Sigmoid colon (tissue), 7 donors: ENCODE measurements at regions of chr20 and their contacts with region 1.

Region 1: GRCh38 chr20:63009045-63009961 is 2.5 kb upstream of the BHLHE23 start:
- DNase-seq: peak; percentile 76
- H3K4me3 ChIP-seq: peak overlapping the region in 1 of 4 donors; percentile 15
- H3K27ac ChIP-seq: no peak overlapping the region
- H3K4me1 ChIP-seq: peaks cover 0 to 41% (median 27%) of the 10 kb centered on the region in 4 donors
- H3K27me3 ChIP-seq: peaks cover 66 to 100% (median 75%) of the 10 kb centered on the region in 3 donors
- CTCF ChIP-seq: peak; percentile 75 to 96 (median 93)
- EP300 ChIP-seq: no peak
- POLR2A ChIP-seq: no peak

Region 2: DNA sequence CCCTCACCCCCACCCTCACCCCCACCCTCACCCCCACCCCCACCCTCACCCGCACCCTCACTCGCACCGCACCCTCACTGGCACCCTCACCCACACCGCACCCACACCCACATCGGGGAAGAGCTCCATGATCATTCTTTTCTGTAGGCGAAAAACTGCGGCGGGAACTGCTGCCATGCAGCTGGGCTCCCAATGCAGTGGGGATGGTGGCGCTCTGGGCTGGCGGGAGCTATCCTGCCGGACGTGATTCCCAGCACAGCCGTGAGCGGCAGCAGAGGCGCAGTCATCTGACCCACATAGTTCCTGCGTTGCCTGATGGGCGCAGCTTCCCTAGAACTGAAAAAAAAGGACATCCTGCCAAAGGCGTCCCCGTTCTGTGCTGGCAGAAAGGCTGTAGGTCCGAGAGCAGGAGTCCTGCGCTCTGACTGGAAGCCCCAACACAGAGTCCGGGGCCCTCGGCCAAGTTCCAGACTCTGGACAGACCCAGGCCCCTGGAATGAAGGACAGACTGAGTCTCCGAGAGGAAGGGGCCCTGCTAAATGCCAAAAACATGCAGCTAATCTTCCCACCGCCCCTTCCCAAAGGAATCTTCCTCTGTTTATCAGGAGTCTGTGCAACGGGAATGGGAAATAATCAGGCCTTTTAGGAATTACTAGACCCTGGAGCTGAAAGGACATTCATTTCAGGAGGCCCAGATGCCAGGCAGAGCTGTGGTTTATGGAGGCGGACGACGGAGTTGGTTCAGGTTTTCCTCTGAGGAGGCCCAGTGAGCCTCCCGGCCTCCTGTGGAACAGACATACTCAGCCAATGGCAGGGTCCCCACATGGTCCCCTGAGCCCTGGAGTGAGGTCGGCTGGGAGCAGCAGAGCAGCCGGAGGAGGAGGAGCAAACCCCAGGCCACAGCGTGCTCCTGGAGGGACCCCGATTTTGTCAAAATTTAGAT is 133.6 kb before region 1 on chr20:
- intact Hi-C with region 1: loop called (anchors 1 kb)
- DNase-seq: peak; percentile 95
- H3K4me3 ChIP-seq: peak overlapping the region in 2 of 4 donors; percentile 23 to 27
- H3K27ac ChIP-seq: peak overlapping the region; percentile 71 to 88 (median 82)
- H3K4me1 ChIP-seq: peaks cover 0 to 30% (median 28%) of the 10 kb centered on the region in 4 donors
- H3K27me3 ChIP-seq: no peaks in the 10 kb centered on the region
- CTCF ChIP-seq: peak; percentile 35 to 53 (median 42)
- EP300 ChIP-seq: peak in 1 of 4 donors; percentile 49
- POLR2A ChIP-seq: no peak

Region 3: GRCh38 chr20:62900052-62900691 is 109.1 kb before region 1 on chr20:
- intact Hi-C with region 1: loop called (anchors 2 kb)
- DNase-seq: peak; percentile 92
- H3K4me3 ChIP-seq: peak overlapping the region in 1 of 4 donors; percentile 2
- H3K27ac ChIP-seq: peak overlapping the region; percentile 3 to 68 (median 31)
- H3K4me1 ChIP-seq: peaks cover 0 to 39% (median 25%) of the 10 kb centered on the region in 4 donors
- H3K27me3 ChIP-seq: no peaks in the 10 kb centered on the region
- CTCF ChIP-seq: peak; percentile 89 to 93 (median 90)
- EP300 ChIP-seq: no peak
- POLR2A ChIP-seq: no peak

Region 4: GRCh38 chr20:62937366-62938104 is 71.8 kb before region 1 on chr20:
- intact Hi-C with region 1: no loop called
- DNase-seq: peak; percentile 98
- H3K4me3 ChIP-seq: peak overlapping the region; percentile 72 to 94 (median 80)
- H3K27ac ChIP-seq: peak overlapping the region; percentile 89 to 99 (median 94)
- H3K4me1 ChIP-seq: peaks cover 0 to 68% (median 57%) of the 10 kb centered on the region in 4 donors
- H3K27me3 ChIP-seq: no peaks in the 10 kb centered on the region
- CTCF ChIP-seq: no peak
- EP300 ChIP-seq: peak in 2 of 4 donors; percentile 21 to 81
- POLR2A ChIP-seq: peak; percentile 78 to 80

Region 5: DNA sequence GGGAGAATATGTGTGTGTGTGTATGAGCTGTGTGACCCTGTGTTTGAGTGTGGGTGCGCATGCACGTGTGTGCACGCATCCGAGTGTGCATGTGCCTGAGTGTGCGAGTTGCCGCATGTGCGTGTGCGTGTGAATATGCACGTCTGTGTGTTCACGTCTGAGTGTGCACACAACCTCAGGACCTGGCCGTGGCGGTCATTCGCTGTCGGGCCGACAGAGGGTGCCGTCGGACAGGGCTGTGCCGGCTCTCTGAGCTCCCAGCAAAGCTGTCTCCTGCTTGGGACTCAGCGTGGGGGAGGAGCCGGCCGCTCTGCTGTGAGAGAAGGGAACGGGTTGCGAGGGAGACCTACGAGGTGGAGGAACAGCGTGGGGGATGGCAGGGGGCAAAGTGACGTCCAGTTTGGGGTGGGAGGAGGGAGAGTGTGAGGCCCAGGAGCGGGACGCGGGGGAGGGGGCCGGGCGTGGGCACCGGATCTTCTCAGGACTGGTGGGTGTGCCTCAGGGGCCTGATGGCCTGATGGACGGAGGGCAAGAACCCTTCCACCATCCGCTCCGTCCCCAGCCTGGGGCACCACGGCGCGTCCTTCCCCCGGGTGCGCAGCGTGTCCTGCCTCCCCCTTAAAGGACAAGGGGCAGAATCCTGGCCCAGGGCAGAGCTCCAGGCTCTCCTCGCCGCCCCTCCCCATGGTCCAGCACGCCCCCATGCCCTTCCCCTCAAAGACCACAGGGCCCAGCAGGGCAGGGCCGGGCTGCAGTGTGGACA is 36.9 kb before region 1 on chr20:
- intact Hi-C with region 1: loop called (anchors 1 kb)
- DNase-seq: peak; percentile 92
- H3K4me3 ChIP-seq: peak overlapping the region in 3 of 4 donors; percentile 16 to 31 (median 28)
- H3K27ac ChIP-seq: no peak overlapping the region
- H3K4me1 ChIP-seq: peaks cover 0 to 11% (median 10%) of the 10 kb centered on the region in 4 donors
- H3K27me3 ChIP-seq: peaks cover 41 to 78% (median 68%) of the 10 kb centered on the region in 3 donors
- CTCF ChIP-seq: peak; percentile 89 to 97 (median 94)
- EP300 ChIP-seq: no peak
- POLR2A ChIP-seq: no peak